HEK293 (cell line): ENCODE measurements at regions of chr19 and their contacts with region 1.

Region 1: DNA sequence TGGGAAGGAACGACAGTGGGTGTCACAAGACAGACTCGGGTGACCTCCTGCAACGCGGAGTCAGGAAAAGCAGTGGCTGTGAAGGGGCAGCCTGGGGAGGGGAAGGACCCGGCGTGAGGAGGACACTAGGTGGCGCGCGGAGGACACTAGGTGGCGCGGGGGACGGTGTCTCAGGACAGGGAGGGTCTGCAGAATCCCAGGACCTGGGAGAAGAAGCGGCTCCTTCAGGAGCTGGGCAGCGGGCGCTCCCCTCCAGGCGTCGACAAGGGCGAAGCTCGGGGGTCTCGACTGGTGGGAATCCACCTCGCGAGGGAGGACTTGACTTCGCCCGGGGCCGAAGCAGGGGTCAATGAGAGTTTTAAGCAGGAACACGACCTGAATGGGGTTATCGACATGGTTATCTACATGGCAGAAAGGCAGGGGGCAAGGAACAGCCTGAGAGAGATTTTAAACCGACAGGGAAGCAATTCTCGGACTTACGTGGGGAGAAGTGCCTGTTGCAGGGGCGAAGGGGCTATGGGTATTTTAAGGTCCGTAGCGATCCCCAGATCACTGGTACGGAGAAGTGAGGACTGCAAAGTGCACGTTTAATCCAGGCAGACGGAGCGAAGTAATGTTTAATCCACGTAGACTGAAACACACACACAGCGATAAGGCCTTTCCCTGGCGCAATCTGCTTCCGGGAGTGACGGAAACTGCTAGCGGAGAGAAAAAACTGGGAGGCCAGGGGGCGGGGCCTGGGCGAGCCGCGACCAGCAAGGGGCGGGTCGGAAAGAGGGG is at the start of gene ZNF616:
- H3K4me3 ChIP-seq: peak within 1 kb of the TSS; percentile 57
- H3K27ac ChIP-seq: peak within 1 kb of the TSS; percentile 73
- H3K4me1 ChIP-seq: no peaks in the 10 kb centered on the region
- CTCF ChIP-seq: peak; percentile 96

Region 2: DNA sequence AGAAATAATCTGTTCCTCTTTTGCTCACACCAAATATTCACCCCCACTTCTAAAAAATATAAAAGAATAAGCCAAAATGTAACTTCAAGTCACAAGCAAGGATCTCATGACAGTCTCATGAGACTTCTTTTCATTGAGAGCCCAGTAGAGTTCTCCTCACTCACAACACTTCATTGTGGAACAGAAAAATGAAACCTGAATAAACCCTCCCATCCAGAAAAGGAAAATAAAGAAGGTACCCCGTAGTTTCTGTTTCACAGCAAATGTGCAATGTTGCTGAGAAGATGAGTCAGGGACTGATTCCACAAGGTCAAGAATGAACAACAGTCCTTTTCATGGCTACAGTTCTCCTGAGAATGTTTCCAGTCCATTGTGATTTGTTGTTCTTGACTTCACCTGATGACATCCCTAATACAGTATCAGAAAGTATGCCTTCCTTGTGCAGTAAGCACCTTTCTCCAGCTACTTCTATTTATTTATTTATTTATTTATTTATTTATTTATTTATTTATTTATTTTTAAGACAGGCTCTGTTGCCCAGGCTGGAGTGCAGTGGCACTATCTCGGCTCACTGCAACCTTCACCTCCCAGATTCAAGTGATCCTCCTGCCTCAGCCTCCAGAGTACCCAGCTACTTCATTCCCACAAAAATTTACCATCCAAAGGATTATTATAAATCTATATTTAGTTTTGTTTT is 37.4 kb before region 1 on chr19:
- CTCF ChIA-PET with region 1: interaction called, 12 read pairs
- POLR2A ChIA-PET with region 1: interaction called, 5 read pairs
- H3K4me3 ChIP-seq: no peak overlapping the region
- H3K27ac ChIP-seq: no peak overlapping the region
- H3K4me1 ChIP-seq: no peaks in the 10 kb centered on the region
- CTCF ChIP-seq: no peak

Region 3: DNA sequence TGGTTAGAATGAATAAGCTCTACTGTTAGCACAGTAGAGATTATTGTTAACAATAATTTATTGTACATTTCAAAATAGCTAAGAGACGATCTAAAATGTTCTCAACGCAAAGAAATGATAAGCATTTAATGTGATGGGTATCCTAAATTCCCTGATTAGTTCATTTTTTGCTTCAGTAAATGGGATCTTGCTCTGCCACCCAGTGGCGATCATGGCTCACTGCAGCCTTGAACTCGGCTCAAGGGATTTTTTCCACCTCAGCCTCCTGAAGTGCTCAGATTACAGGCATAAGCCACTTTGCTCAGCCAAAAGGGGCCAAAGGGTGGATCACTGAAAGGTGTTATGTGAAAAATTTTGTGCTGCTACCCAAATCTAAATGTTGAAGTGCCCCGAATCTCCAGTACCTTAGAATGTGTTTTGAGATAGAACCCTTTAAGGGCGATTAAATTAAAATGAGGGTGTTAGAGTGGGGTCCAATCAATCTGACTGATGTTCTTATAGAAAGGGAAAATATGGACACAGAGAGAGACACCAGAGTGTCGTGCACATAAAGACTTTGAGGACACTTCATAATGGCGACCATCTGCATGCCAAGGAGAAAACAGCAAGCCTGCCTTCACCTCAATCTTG is 98.4 kb after region 1 on chr19:
- CTCF ChIA-PET with region 1: interaction called, 13 read pairs
- POLR2A ChIA-PET with region 1: interaction called, 4 read pairs
- H3K4me3 ChIP-seq: no peak overlapping the region
- H3K27ac ChIP-seq: no peak overlapping the region
- H3K4me1 ChIP-seq: no peaks in the 10 kb centered on the region
- CTCF ChIP-seq: peak; percentile 42; the same call in 1 of the 2 replicates

Region 4: GRCh38 chr19:52415411-52416110 is 276.1 kb after region 1 on chr19:
- CTCF ChIA-PET with region 1: no interaction called
- POLR2A ChIA-PET with region 1: no interaction called
- H3K4me3 ChIP-seq: no peak overlapping the region
- H3K27ac ChIP-seq: no peak overlapping the region
- H3K4me1 ChIP-seq: no peaks in the 10 kb centered on the region
- CTCF ChIP-seq: no peak